ENCODE measurements at regions of chr16 and their contacts with region 1.

Region 1: GRCh38 chr16:67159593-67160406 is at the starts of genes FBXL8 and TRADD:
- DNase-seq: peak; percentile 59 to 75
- H3K4me3 ChIP-seq: peak within 1 kb of the TSS; percentile 75 to 90
- H3K27ac ChIP-seq: peak within 1 kb of the TSS; percentile 70 to 80
- H3K4me1 ChIP-seq: peaks cover 0 to 36% of the 10 kb centered on the region in 2 donors
- H3K27me3 ChIP-seq: no peaks in the 10 kb centered on the region
- CTCF ChIP-seq: peak in 3 of 4 experiments; percentile 11 to 45 (median 22)
- POLR2A ChIP-seq: peak; percentile 50 to 78
- total RNA-seq, gene FBXL8: 2.6 to 47.4 (median 14.1) TPM in 3 of 4 donors, not detected in the other
- total RNA-seq, gene TRADD: 2.6 to 21.0 (median 10.6) TPM

Region 2: GRCh38 chr16:66977341-66978113 is 182.3 kb before region 1 on chr16:
- intact Hi-C with region 1: loop called (anchors 5 kb)
- DNase-seq: peak; percentile 87 to 89
- H3K4me3 ChIP-seq: no peak overlapping the region
- H3K27ac ChIP-seq: no peak overlapping the region
- H3K4me1 ChIP-seq: no peaks in the 10 kb centered on the region
- H3K27me3 ChIP-seq: no peaks in the 10 kb centered on the region
- CTCF ChIP-seq: peak; percentile 94 to 99 (median 96)
- POLR2A ChIP-seq: peak in 1 of 2 donors; percentile 23

Measured in uterus (tissue), 4 donors.